ENCODE measurements at regions of chr2 and their contacts with region 1.

Region 1: GRCh38 chr2:140947236-140947635 is 1183.6 kb downstream of the LRP1B start:
- DNase-seq: no peak
- ATAC-seq: no peak
- H3K4me3 ChIP-seq: no peak overlapping the region
- H3K27ac ChIP-seq: no peak overlapping the region
- H3K4me1 ChIP-seq: no peaks in the 10 kb centered on the region
- H3K27me3 ChIP-seq: no peaks in the 10 kb centered on the region
- CTCF ChIP-seq: no peak
- POLR2A ChIP-seq: no peak
- RAD21 ChIP-seq: no peak

Region 2: GRCh38 chr2:140835079-140835478 is 112.2 kb before region 1 on chr2:
- CTCF ChIA-PET with region 1: no interaction called
- POLR2A ChIA-PET with region 1: no interaction called
- dilution Hi-C with region 1: no loop called
- in situ Hi-C with region 1: no loop called
- intact Hi-C with region 1: no loop called
- DNase-seq: no peak
- ATAC-seq: no peak
- H3K4me3 ChIP-seq: no peak overlapping the region
- H3K27ac ChIP-seq: no peak overlapping the region
- H3K4me1 ChIP-seq: peaks cover 2% of the 10 kb centered on the region; the same call in 1 of the 2 replicates
- H3K27me3 ChIP-seq: no peaks in the 10 kb centered on the region
- CTCF ChIP-seq: no peak
- POLR2A ChIP-seq: no peak
- RAD21 ChIP-seq: no peak

Region 3: GRCh38 chr2:140851258-140851981 is 95.8 kb before region 1 on chr2:
- CTCF ChIA-PET with region 1: no interaction called
- POLR2A ChIA-PET with region 1: no interaction called
- dilution Hi-C with region 1: no loop called
- in situ Hi-C with region 1: no loop called
- intact Hi-C with region 1: no loop called
- DNase-seq: peak; percentile 1
- ATAC-seq: no peak
- H3K4me3 ChIP-seq: no peak overlapping the region
- H3K27ac ChIP-seq: no peak overlapping the region
- H3K4me1 ChIP-seq: no peaks in the 10 kb centered on the region
- H3K27me3 ChIP-seq: no peaks in the 10 kb centered on the region
- CTCF ChIP-seq: no peak
- POLR2A ChIP-seq: no peak
- RAD21 ChIP-seq: no peak

Region 4: GRCh38 chr2:140929849-140930248 is 17.4 kb before region 1 on chr2:
- CTCF ChIA-PET with region 1: no interaction called
- POLR2A ChIA-PET with region 1: no interaction called
- dilution Hi-C with region 1: no loop called
- in situ Hi-C with region 1: no loop called
- intact Hi-C with region 1: loop called (anchors 2 kb)
- DNase-seq: no peak
- ATAC-seq: no peak
- H3K4me3 ChIP-seq: no peak overlapping the region
- H3K27ac ChIP-seq: no peak overlapping the region
- H3K4me1 ChIP-seq: no peaks in the 10 kb centered on the region
- H3K27me3 ChIP-seq: no peaks in the 10 kb centered on the region
- CTCF ChIP-seq: no peak
- POLR2A ChIP-seq: no peak
- RAD21 ChIP-seq: no peak